ENCODE measurements at regions of chr12 and their contacts with region 1.

Region 1: GRCh38 chr12:92034858-92035401 is 110.7 kb downstream of the BTG1 start:
- DNase-seq: peak; percentile 26 to 84 (median 58)
- ATAC-seq: peak; percentile 53
- H3K4me3 ChIP-seq: peak overlapping the region; percentile 54
- H3K4me3 Mint-ChIP-seq: peak overlapping the region; percentile 89
- H3K27ac ChIP-seq: peak overlapping the region; percentile 66 to 67
- H3K27ac Mint-ChIP-seq: peak overlapping the region; percentile 96
- H3K4me1 ChIP-seq: peaks cover 79% of the 10 kb centered on the region
- H3K4me1 Mint-ChIP-seq: peaks cover 95% of the 10 kb centered on the region
- H3K27me3 ChIP-seq: no peaks in the 10 kb centered on the region
- H3K27me3 Mint-ChIP-seq: no peaks in the 10 kb centered on the region
- CTCF ChIP-seq: no peak

Region 2: GRCh38 chr12:91947459-91947858 is 87.5 kb before region 1 on chr12:
- CTCF ChIA-PET with region 1: no interaction called
- POLR2A ChIA-PET with region 1: no interaction called
- intact Hi-C with region 1: no loop called
- DNase-seq: peak in 2 of 14 experiments; percentile 33 to 54
- ATAC-seq: no peak
- H3K4me3 ChIP-seq: no peak overlapping the region
- H3K4me3 Mint-ChIP-seq: no peak overlapping the region
- H3K27ac ChIP-seq: no peak overlapping the region
- H3K27ac Mint-ChIP-seq: no peak overlapping the region
- H3K4me1 ChIP-seq: peaks cover 6% of the 10 kb centered on the region
- H3K4me1 Mint-ChIP-seq: peaks cover 24% of the 10 kb centered on the region
- H3K27me3 ChIP-seq: no peaks in the 10 kb centered on the region
- H3K27me3 Mint-ChIP-seq: no peaks in the 10 kb centered on the region
- CTCF ChIP-seq: no peak

Region 3: GRCh38 chr12:91978143-91978542 is 56.8 kb before region 1 on chr12:
- CTCF ChIA-PET with region 1: no interaction called
- POLR2A ChIA-PET with region 1: interaction called, 4 read pairs
- intact Hi-C with region 1: loop called in 1 of 2 experiments (anchors 1 kb)
- DNase-seq: peak in 12 of 14 experiments; percentile 8 to 85 (median 44)
- ATAC-seq: peak; percentile 88
- H3K4me3 ChIP-seq: no peak overlapping the region
- H3K4me3 Mint-ChIP-seq: peak overlapping the region; percentile 3
- H3K27ac ChIP-seq: peak overlapping the region; percentile 2 to 52
- H3K27ac Mint-ChIP-seq: peak overlapping the region; percentile 79
- H3K4me1 ChIP-seq: peaks cover 24% of the 10 kb centered on the region
- H3K4me1 Mint-ChIP-seq: peaks cover 55% of the 10 kb centered on the region
- H3K27me3 ChIP-seq: no peaks in the 10 kb centered on the region
- H3K27me3 Mint-ChIP-seq: no peaks in the 10 kb centered on the region
- CTCF ChIP-seq: no peak

Region 4: GRCh38 chr12:91998316-91998715 is 36.6 kb before region 1 on chr12:
- CTCF ChIA-PET with region 1: interaction called, 3 read pairs
- POLR2A ChIA-PET with region 1: interaction called, 4 read pairs
- intact Hi-C with region 1: loop called in 1 of 2 experiments (anchors 5 kb)
- DNase-seq: no peak
- ATAC-seq: no peak
- H3K4me3 ChIP-seq: no peak overlapping the region
- H3K4me3 Mint-ChIP-seq: no peak overlapping the region
- H3K27ac ChIP-seq: no peak overlapping the region
- H3K27ac Mint-ChIP-seq: no peak overlapping the region
- H3K4me1 ChIP-seq: no peaks in the 10 kb centered on the region
- H3K4me1 Mint-ChIP-seq: peaks cover 50% of the 10 kb centered on the region
- H3K27me3 ChIP-seq: no peaks in the 10 kb centered on the region
- H3K27me3 Mint-ChIP-seq: no peaks in the 10 kb centered on the region
- CTCF ChIP-seq: no peak

Region 5: DNA sequence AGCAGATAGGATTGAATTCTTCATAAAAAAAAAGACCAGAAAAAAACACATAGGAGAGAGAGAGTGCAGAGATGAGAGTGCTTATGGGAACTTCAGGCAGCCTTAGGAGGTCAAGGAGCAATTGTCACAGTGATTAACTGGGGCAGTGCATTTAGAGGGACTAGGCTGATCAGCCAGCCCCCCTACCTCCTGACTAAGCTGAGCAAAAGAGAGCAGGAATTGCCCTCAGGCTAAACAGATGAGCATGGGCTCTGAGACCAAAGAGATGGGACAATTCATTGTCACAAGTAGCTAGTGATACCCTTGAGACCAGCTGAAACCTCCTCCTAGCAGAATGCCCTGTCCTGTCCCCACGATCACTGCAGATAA is 13.3 kb before region 1 on chr12:
- CTCF ChIA-PET with region 1: interaction called, 3 read pairs
- POLR2A ChIA-PET with region 1: interaction called, 10 read pairs
- intact Hi-C with region 1: no loop called
- DNase-seq: no peak
- ATAC-seq: no peak
- H3K4me3 ChIP-seq: no peak overlapping the region
- H3K4me3 Mint-ChIP-seq: no peak overlapping the region
- H3K27ac ChIP-seq: no peak overlapping the region
- H3K27ac Mint-ChIP-seq: peak overlapping the region; percentile 55
- H3K4me1 ChIP-seq: peaks cover 9% of the 10 kb centered on the region
- H3K4me1 Mint-ChIP-seq: peaks cover 45% of the 10 kb centered on the region
- H3K27me3 ChIP-seq: no peaks in the 10 kb centered on the region
- H3K27me3 Mint-ChIP-seq: no peaks in the 10 kb centered on the region
- CTCF ChIP-seq: no peak

Region 6: GRCh38 chr12:92078167-92079053 is 43.5 kb after region 1 on chr12:
- CTCF ChIA-PET with region 1: no interaction called
- POLR2A ChIA-PET with region 1: interaction called, 6 read pairs
- intact Hi-C with region 1: loop called in 1 of 2 experiments (anchors 5 kb)
- DNase-seq: no peak
- ATAC-seq: no peak
- H3K4me3 ChIP-seq: no peak overlapping the region
- H3K4me3 Mint-ChIP-seq: peak overlapping the region; percentile 12
- H3K27ac ChIP-seq: no peak overlapping the region
- H3K27ac Mint-ChIP-seq: peak overlapping the region; percentile 46
- H3K4me1 ChIP-seq: peaks cover 15% of the 10 kb centered on the region
- H3K4me1 Mint-ChIP-seq: peaks cover 78% of the 10 kb centered on the region
- H3K27me3 ChIP-seq: no peaks in the 10 kb centered on the region
- H3K27me3 Mint-ChIP-seq: no peaks in the 10 kb centered on the region
- CTCF ChIP-seq: no peak

Region 7: GRCh38 chr12:92114834-92115233 is 79.9 kb after region 1 on chr12:
- CTCF ChIA-PET with region 1: interaction called, 3 read pairs
- POLR2A ChIA-PET with region 1: interaction called, 19 read pairs
- intact Hi-C with region 1: no loop called
- DNase-seq: no peak
- ATAC-seq: no peak
- H3K4me3 ChIP-seq: no peak overlapping the region
- H3K4me3 Mint-ChIP-seq: peak overlapping the region; percentile 70
- H3K27ac ChIP-seq: no peak overlapping the region
- H3K27ac Mint-ChIP-seq: peak overlapping the region; percentile 61
- H3K4me1 ChIP-seq: peaks cover 6% of the 10 kb centered on the region
- H3K4me1 Mint-ChIP-seq: peaks cover 68% of the 10 kb centered on the region
- H3K27me3 ChIP-seq: no peaks in the 10 kb centered on the region
- H3K27me3 Mint-ChIP-seq: no peaks in the 10 kb centered on the region
- CTCF ChIP-seq: no peak

Measured in CD4-positive, alpha-beta T cell (primary cell).